Activated naive CD4-positive, alpha-beta T cell treated with anti-CD3 and anti-CD28 coated beads for 36 hours (primary cell): ENCODE measurements at regions of chr5 and their contacts with region 1.

Region 1: GRCh38 chr5:53481887-53482716 is 1.7 kb downstream of the FST start:
- DNase-seq: peak; percentile 71
- H3K4me3 Mint-ChIP-seq: peak overlapping the region; percentile 76
- H3K27ac Mint-ChIP-seq: no peak overlapping the region
- H3K4me1 Mint-ChIP-seq: peaks cover 15% of the 10 kb centered on the region
- H3K27me3 Mint-ChIP-seq: peaks cover 38% of the 10 kb centered on the region

Region 2: GRCh38 chr5:53262348-53262970 is 219.6 kb before region 1 on chr5:
- CTCF ChIA-PET with region 1: no interaction called
- intact Hi-C with region 1: loop called (anchors 2 kb)
- DNase-seq: peak; percentile 25
- H3K4me3 Mint-ChIP-seq: no peak overlapping the region
- H3K27ac Mint-ChIP-seq: no peak overlapping the region
- H3K4me1 Mint-ChIP-seq: no peaks in the 10 kb centered on the region
- H3K27me3 Mint-ChIP-seq: peaks cover 10% of the 10 kb centered on the region

Region 3: DNA sequence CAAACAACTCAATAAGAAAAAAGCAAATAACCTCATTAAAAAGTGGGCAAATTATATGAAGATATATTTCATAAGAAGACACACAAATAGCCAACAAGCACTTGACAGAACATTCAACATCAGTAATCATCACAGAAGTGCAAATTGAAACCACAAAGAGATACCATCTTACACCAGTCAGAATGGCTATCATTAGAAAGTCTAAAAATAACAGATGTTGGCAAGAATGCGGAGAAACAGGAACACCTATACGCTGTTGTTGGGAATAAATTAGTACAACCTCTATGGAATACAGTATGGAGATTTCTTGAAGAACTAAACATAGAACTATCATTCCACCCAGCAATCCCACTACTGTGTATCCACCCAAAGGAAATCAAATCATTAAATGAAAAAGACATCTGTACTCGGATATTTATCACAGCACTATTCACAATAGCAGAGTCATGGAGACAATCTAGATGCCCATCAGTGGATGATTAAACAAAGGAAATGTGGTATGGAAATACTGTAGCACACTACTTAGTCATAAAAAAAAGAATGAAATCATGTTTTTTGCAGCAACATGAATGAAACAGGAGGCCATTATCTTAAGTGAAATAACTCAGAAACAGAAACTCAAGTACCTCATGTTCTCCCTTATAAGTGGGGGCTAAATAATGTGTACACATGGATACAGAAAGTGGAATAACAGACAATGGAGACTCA is 108.5 kb before region 1 on chr5:
- CTCF ChIA-PET with region 1: no interaction called
- intact Hi-C with region 1: no loop called
- DNase-seq: no peak
- H3K4me3 Mint-ChIP-seq: no peak overlapping the region
- H3K27ac Mint-ChIP-seq: no peak overlapping the region
- H3K4me1 Mint-ChIP-seq: peaks cover 9% of the 10 kb centered on the region
- H3K27me3 Mint-ChIP-seq: peaks cover 6% of the 10 kb centered on the region

Region 4: DNA sequence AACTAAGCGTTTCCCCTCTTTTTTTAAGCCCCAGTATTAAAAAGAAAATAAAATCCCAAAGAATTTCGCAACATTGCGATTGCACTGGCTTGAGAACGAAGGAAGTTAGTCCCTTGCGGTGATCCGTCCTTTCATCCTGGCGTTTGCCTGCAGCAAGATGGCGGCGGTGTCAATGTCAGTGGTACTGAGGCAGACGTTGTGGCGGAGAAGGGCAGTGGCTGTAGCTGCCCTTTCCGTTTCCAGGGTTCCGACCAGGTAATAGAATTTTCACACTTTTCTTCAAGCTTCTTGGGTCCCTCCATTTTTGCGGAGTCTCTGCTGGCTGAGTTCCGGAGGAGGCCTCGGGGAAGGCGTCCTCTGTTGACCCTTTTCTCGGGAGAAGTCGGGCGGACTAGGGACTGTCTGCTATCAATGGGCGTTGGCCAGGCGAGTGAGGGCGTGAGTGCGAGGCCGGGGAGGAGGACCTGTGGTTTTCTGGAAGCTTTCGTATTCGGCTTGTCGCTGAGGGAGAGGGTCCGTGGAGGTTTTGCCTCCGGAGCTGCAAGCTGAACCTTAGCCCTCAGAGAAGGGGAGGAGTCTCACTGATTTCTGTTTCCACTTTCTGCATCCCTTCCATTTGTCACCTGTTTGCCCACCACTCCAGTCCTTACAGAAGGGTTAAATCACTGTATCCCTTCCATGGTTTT is 78.5 kb after region 1 on chr5 and contains the start of gene NDUFS4:
- CTCF ChIA-PET with region 1: interaction called, 3 read pairs
- intact Hi-C with region 1: loop called (anchors 1 kb)
- DNase-seq: peak; percentile 94
- H3K4me3 Mint-ChIP-seq: peak within 1 kb of the TSS; percentile 97
- H3K27ac Mint-ChIP-seq: peak within 1 kb of the TSS; percentile 92
- H3K4me1 Mint-ChIP-seq: peaks cover 26% of the 10 kb centered on the region
- H3K27me3 Mint-ChIP-seq: peaks cover 18% of the 10 kb centered on the region
- total RNA-seq, gene NDUFS4: 81.4 to 84.1 TPM

Region 5: DNA sequence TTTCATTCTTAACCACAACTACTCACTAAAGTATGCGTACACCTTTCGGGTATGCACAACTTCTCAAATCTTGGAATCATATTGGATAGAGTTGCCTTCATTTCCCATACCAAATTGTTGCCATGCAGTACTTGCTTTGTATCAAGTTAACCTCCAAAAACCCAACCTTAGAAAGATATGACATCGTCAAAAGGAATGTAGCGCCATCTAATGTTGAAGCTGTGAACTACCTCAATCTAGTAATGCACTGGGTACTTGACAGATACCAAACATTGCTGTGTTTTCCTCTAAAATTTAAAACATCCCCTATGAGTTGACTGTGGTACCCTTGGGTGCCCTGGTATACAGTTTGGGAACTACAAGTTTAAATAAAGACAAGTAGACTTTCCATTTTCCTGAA is 509.8 kb after region 1 on chr5:
- CTCF ChIA-PET with region 1: no interaction called
- intact Hi-C with region 1: loop called (anchors 1 kb)
- DNase-seq: no peak
- H3K4me3 Mint-ChIP-seq: no peak overlapping the region
- H3K27ac Mint-ChIP-seq: no peak overlapping the region
- H3K4me1 Mint-ChIP-seq: peaks cover 4% of the 10 kb centered on the region
- H3K27me3 Mint-ChIP-seq: no peaks in the 10 kb centered on the region

Region 6: DNA sequence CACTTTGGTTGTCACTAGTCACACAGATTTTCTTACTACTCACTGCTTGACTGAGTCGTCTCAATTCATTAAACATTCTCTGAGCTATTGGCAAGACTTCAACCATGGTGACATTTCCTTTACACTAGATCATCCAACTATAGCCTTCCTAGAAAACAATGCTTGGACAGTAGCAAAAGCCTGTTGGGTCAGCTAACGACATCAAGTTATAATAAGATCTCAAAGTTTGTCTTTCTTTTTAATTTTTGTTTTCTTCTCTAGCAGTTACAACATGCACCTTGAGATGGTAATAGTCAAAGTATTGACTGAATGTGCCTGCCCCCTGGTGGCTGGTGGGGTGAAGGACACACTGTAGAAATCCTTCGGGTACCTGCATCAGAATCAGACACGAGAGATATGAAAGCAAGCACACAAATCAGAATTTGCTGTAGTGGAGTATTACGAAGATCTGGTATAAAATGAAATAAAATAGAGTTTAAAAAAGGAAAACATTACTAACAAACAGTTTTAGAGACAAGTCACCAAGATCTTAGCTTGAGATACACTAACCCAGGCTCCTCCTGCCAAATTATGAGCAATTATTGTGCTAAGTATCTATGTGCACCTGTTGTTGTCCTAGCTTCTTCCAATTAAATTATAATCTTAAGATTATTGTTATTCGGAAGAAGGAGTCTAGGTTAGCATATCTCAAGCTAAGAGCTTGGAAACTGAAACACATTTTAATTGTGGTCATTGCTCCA is 747.1 kb after region 1 on chr5:
- CTCF ChIA-PET with region 1: interaction called, 7 read pairs
- intact Hi-C with region 1: loop called (anchors 1 kb)
- DNase-seq: peak; percentile 87
- H3K4me3 Mint-ChIP-seq: no peak overlapping the region
- H3K27ac Mint-ChIP-seq: no peak overlapping the region
- H3K4me1 Mint-ChIP-seq: peaks cover 2% of the 10 kb centered on the region
- H3K27me3 Mint-ChIP-seq: no peaks in the 10 kb centered on the region